ENCODE measurements at regions of chr15 and their contacts with region 1.

Region 1: DNA sequence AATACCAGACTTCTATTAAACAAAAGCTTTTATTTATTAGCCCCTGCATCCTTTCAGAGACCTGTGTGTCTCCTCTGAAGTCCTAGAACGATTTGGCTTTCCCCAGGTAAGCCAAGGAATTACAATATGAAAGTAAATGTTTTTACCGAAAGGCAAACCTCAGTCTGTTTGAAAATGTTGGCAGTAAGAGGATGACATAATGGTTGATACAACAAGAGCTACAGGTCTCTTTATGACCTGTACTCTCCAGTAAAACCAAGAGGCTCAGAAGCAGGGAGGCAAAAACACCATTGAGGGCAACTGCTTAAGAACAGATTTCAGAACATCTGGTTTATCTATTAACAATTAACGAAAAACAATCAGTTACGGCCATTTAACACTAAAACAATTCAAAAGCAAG is 107.8 kb downstream of the ADAM10 start:
- DNase-seq: no peak
- ATAC-seq: no peak
- H3K4me3 ChIP-seq: no peak overlapping the region
- H3K4me3 Mint-ChIP-seq: no peak overlapping the region
- H3K27ac ChIP-seq: no peak overlapping the region
- H3K27ac Mint-ChIP-seq: peak overlapping the region; percentile 20
- H3K4me1 ChIP-seq: no peaks in the 10 kb centered on the region
- H3K4me1 Mint-ChIP-seq: peaks cover 8% of the 10 kb centered on the region
- H3K27me3 ChIP-seq: no peaks in the 10 kb centered on the region
- H3K27me3 Mint-ChIP-seq: no peaks in the 10 kb centered on the region
- CTCF ChIP-seq: no peak

Region 2: DNA sequence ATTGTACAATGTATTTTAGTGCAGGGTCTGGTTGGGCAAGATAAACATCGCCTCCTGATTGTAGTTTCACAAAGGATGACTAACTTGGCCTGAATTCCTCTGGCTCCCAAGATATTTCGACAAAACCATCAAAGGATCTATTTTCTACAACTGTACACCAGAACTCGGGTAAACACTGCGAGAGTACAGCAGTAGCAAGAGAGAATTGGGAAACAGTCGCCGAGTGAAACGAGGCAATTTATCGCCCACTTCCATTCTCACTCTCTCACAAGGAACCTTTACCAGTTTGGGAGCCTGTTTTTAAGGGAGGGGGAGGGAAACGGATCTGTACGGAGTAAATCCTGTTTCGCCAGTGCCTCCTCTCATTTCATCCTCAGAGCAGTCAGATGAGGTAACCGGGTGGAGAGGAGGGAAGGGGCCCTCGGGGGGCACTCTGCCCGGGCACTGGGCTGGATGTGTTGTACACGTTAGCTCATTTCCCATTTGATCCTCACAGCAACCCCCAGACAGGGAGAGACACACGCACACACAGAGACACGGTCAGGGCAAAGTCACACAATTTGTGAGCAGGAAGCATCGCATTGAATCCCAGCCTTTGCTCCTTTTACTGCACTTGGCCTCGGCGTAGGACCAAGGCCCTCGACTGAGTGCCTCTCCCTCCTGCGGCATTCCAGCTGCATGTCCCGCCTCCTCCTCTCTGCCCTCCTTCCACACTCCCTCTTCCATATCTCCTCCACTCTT is 89.7 kb before region 1 on chr15:
- CTCF ChIA-PET with region 1: no interaction called
- POLR2A ChIA-PET with region 1: no interaction called
- intact Hi-C with region 1: no loop called
- DNase-seq: no peak
- ATAC-seq: no peak
- H3K4me3 ChIP-seq: no peak overlapping the region
- H3K4me3 Mint-ChIP-seq: no peak overlapping the region
- H3K27ac ChIP-seq: no peak overlapping the region
- H3K27ac Mint-ChIP-seq: no peak overlapping the region
- H3K4me1 ChIP-seq: peaks cover 6% of the 10 kb centered on the region
- H3K4me1 Mint-ChIP-seq: peaks cover 13% of the 10 kb centered on the region
- H3K27me3 ChIP-seq: no peaks in the 10 kb centered on the region
- H3K27me3 Mint-ChIP-seq: no peaks in the 10 kb centered on the region
- CTCF ChIP-seq: no peak

Region 3: DNA sequence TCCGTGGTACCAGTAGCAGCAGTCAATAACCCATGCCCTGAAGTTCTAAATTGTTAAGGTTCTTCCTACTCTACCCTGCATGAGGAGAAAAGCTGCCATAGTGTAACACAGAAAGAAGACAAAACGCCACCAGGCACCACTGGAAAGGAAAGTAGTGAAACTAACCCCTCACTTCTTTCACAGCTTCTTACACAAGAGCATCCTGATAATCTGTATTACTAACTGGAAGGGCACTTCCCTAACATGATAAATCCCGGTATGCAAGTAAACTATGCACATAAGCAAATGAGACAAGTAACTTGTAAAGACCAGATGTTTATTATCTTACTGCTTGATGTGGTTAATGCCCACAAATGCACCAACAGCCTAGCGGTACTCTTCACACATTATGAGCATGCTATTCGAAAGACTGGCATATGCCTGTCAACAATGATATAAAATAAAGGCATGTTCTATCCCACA is 33.5 kb before region 1 on chr15:
- CTCF ChIA-PET with region 1: no interaction called
- POLR2A ChIA-PET with region 1: no interaction called
- intact Hi-C with region 1: loop called in 1 of 2 experiments (anchors 5 kb)
- DNase-seq: peak in 2 of 9 experiments; percentile 50 to 69
- ATAC-seq: peak; percentile 55
- H3K4me3 ChIP-seq: no peak overlapping the region
- H3K4me3 Mint-ChIP-seq: peak overlapping the region; percentile 5
- H3K27ac ChIP-seq: peak overlapping the region; percentile 9 to 52
- H3K27ac Mint-ChIP-seq: peak overlapping the region; percentile 86
- H3K4me1 ChIP-seq: no peaks in the 10 kb centered on the region
- H3K4me1 Mint-ChIP-seq: peaks cover 20% of the 10 kb centered on the region
- H3K27me3 ChIP-seq: no peaks in the 10 kb centered on the region
- H3K27me3 Mint-ChIP-seq: no peaks in the 10 kb centered on the region
- CTCF ChIP-seq: no peak

Region 4: DNA sequence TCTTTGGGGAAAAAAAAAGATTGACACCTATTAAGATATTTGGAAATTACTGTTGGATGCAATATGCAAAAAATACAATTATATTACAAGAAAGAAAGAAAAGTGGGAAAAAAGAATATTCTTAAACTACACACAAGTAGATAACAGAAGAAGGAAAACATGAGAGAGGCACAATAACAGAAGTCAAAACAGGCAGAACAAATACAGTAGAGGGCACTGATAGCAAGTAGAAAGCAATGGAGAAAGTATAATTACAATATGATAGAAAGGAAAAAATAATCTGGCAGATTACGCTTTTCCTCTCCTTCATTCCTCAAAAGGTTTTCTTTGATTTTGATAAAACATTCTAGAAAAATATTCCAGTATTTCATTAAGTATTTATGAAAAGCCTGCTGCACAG is 35.8 kb after region 1 on chr15:
- CTCF ChIA-PET with region 1: no interaction called
- POLR2A ChIA-PET with region 1: no interaction called
- intact Hi-C with region 1: no loop called
- DNase-seq: no peak
- ATAC-seq: no peak
- H3K4me3 ChIP-seq: no peak overlapping the region
- H3K4me3 Mint-ChIP-seq: no peak overlapping the region
- H3K27ac ChIP-seq: no peak overlapping the region
- H3K27ac Mint-ChIP-seq: no peak overlapping the region
- H3K4me1 ChIP-seq: no peaks in the 10 kb centered on the region
- H3K4me1 Mint-ChIP-seq: peaks cover 12% of the 10 kb centered on the region
- H3K27me3 ChIP-seq: no peaks in the 10 kb centered on the region
- H3K27me3 Mint-ChIP-seq: no peaks in the 10 kb centered on the region
- CTCF ChIP-seq: no peak

Measured in CD8-positive, alpha-beta T cell (primary cell).